Endothelial cell of umbilical vein (primary cell): ENCODE measurements at regions of chr13 and their contacts with region 1.

Region 1: GRCh38 chr13:30114571-30115256 is 192.6 kb downstream of the KATNAL1 start:
- DNase-seq: peak; percentile 80
- H3K4me3 ChIP-seq: peak overlapping the region; percentile 5 to 45 (median 40)
- H3K27ac ChIP-seq: no peak overlapping the region
- H3K4me1 ChIP-seq: peaks cover 3% of the 10 kb centered on the region
- H3K27me3 ChIP-seq: peaks cover 38 to 47% of the 10 kb centered on the region in 2 experiments
- CTCF ChIP-seq: peak; percentile 94 to 95
- POLR2A ChIP-seq: no peak

Region 2: DNA sequence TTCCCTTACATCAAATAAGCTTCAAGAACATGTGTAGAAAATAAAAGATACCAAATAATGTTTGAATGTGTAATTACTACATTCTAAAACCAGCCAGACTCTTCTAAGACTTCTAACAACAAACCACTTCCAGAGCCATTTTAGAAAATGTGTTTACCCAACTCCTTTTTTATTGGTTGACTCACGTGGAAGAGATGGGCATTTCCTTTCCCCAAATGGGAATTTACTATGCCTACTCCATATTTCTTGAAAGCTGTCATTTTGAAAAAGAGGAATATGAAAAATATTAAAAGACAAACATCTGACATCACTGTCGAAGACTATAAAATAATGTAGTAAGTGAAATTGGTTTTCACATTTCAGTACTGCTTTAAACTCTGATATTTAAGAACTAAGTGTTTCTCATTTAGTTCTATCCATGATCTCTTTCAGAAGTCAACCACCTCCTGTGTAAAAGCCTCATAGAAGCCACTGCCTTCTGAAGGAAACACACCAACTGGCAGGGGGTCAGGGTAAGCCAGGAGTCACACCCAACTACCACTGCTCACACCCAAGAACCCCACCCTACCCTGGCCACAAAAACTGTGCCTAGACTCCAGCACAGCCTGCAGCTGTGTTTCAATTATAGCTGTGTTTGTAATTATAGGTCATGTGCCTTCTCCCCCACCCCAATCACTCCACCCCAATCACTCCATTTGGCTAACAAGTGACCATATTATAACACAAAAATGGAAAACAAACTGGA is 351.1 kb before region 1 on chr13:
- CTCF ChIA-PET with region 1: interaction called, 504 read pairs
- POLR2A ChIA-PET with region 1: no interaction called
- dilution Hi-C with region 1: no loop called
- intact Hi-C with region 1: no loop called
- DNase-seq: no peak
- H3K4me3 ChIP-seq: no peak overlapping the region
- H3K27ac ChIP-seq: no peak overlapping the region
- H3K4me1 ChIP-seq: no peaks in the 10 kb centered on the region
- H3K27me3 ChIP-seq: no peaks in the 10 kb centered on the region
- CTCF ChIP-seq: no peak
- POLR2A ChIP-seq: no peak

Region 3: GRCh38 chr13:29771247-29771646 is 343.5 kb before region 1 on chr13:
- CTCF ChIA-PET with region 1: interaction called, 504 read pairs
- POLR2A ChIA-PET with region 1: interaction called, 3 read pairs
- dilution Hi-C with region 1: no loop called
- intact Hi-C with region 1: loop called (anchors 1 kb)
- DNase-seq: peak; percentile 60
- H3K4me3 ChIP-seq: no peak overlapping the region
- H3K27ac ChIP-seq: no peak overlapping the region
- H3K4me1 ChIP-seq: no peaks in the 10 kb centered on the region
- H3K27me3 ChIP-seq: no peaks in the 10 kb centered on the region
- CTCF ChIP-seq: peak in 1 of 2 donors; percentile 13
- POLR2A ChIP-seq: no peak

Region 4: GRCh38 chr13:29850224-29850898 is 264.4 kb before region 1 on chr13 and contains the start of gene UBL3:
- CTCF ChIA-PET with region 1: interaction called, 37 read pairs
- POLR2A ChIA-PET with region 1: no interaction called
- dilution Hi-C with region 1: no loop called
- intact Hi-C with region 1: loop called (anchors 1 kb)
- DNase-seq: peak; percentile 97
- H3K4me3 ChIP-seq: peak within 1 kb of the TSS; percentile 80 to 99 (median 98)
- H3K27ac ChIP-seq: peak within 1 kb of the TSS; percentile 83
- H3K4me1 ChIP-seq: peaks cover 22% of the 10 kb centered on the region
- H3K27me3 ChIP-seq: peaks cover 0 to 14% of the 10 kb centered on the region in 2 experiments
- CTCF ChIP-seq: no peak
- POLR2A ChIP-seq: peak; percentile 62
- total RNA-seq, gene UBL3: 11.1 and 11.8 TPM in 2 replicates

Region 5: GRCh38 chr13:30091691-30092090 is 23.0 kb before region 1 on chr13:
- CTCF ChIA-PET with region 1: no interaction called
- POLR2A ChIA-PET with region 1: no interaction called
- dilution Hi-C with region 1: no loop called
- intact Hi-C with region 1: no loop called
- DNase-seq: no peak
- H3K4me3 ChIP-seq: no peak overlapping the region
- H3K27ac ChIP-seq: no peak overlapping the region
- H3K4me1 ChIP-seq: no peaks in the 10 kb centered on the region
- H3K27me3 ChIP-seq: no peaks in the 10 kb centered on the region
- CTCF ChIP-seq: no peak
- POLR2A ChIP-seq: no peak

Region 6: DNA sequence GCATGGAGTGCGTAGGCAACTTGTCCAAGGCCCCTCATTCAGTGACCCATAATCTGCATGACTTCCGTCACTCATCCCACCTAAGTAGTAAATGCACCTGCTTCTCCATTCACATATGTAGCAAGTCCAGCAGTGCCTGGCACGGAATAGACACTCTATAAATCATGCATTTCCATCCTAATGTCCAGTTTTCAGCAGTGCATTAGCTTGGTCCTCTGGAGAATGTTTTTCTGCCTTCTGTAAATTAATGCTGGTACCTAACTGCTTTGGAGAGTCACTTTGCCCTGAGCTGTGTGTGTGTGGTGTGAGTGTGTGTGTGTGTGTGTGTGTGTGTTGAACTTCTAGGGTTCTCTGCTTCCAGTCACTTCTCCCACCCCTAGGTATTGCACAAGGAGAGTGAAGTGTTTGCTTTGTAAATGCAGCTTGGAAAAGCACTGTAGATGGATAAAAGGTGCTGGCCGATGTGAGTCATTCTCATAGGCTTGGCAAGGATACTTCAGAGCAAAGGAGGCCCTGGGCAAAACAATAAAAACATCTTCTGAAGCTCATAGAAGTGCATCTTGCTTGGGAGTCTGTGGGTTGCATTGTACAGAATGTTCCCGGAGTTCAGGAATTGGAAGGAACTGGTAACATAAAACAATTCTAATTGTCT is 10.8 kb after region 1 on chr13:
- CTCF ChIA-PET with region 1: interaction called, 76 read pairs
- POLR2A ChIA-PET with region 1: no interaction called
- dilution Hi-C with region 1: no loop called
- intact Hi-C with region 1: no loop called
- DNase-seq: no peak
- H3K4me3 ChIP-seq: no peak overlapping the region
- H3K27ac ChIP-seq: no peak overlapping the region
- H3K4me1 ChIP-seq: no peaks in the 10 kb centered on the region
- H3K27me3 ChIP-seq: peaks cover 6 to 17% of the 10 kb centered on the region in 2 experiments
- CTCF ChIP-seq: no peak
- POLR2A ChIP-seq: no peak

Region 7: GRCh38 chr13:30276178-30276577 is 161.5 kb after region 1 on chr13:
- CTCF ChIA-PET with region 1: no interaction called
- POLR2A ChIA-PET with region 1: no interaction called
- dilution Hi-C with region 1: no loop called
- intact Hi-C with region 1: no loop called
- DNase-seq: no peak
- H3K4me3 ChIP-seq: no peak overlapping the region
- H3K27ac ChIP-seq: no peak overlapping the region
- H3K4me1 ChIP-seq: peaks cover 6% of the 10 kb centered on the region
- H3K27me3 ChIP-seq: no peaks in the 10 kb centered on the region
- CTCF ChIP-seq: no peak
- POLR2A ChIP-seq: no peak